Ovary (tissue), 10 donors: ENCODE measurements at regions of chr14 and their contacts with region 1.

Region 1: DNA sequence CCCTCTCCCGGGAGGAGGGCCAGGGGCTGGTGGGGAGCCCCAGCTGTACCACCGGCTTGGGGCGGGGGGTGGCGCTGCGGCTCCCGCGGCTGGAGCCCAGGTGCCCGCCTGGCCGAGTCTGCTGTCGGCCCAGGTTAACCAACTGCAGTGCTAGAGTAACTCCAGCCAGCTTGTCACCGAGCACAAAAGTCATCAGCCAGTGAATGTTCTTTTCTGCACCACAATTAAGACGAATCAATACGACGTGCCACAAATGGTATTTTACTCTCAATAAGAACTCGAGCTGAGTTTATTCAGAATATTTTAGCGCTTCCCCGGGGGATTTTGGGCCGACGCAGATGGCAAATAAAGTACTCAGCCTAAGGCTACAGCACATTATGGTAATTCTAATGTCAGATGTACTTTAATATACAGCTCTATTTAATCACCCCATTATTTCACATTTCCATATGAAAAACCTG is 83.2 kb downstream of the BCL11B start:
- DNase-seq: no peak
- H3K4me3 ChIP-seq: no peak overlapping the region
- H3K27ac ChIP-seq: no peak overlapping the region
- H3K4me1 ChIP-seq: peaks cover 4% of the 10 kb centered on the region
- H3K27me3 ChIP-seq: no peaks in the 10 kb centered on the region
- CTCF ChIP-seq: no peak
- EP300 ChIP-seq: no peak
- POLR2A ChIP-seq: no peak

Region 2: DNA sequence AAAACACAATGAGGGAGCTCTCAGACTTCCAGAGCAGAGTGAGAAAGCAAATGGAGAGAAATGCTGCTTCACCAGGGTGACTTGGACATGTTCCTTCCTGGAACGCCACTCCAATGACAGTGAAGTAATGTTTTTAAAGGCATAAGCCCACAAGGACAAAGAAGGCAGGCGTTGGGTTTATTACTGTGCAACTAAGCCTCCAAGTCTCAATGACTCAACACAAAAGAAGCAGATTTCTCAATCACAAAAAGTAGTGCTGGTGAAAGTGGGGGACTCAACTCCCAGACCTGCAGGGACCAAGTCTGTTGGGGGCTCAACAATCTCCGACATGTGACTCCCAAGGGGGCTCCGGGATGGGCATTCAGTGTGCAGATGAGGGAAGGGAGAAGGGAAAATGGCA is 421.9 kb before region 1 on chr14:
- intact Hi-C with region 1: no loop called
- DNase-seq: no peak
- H3K4me3 ChIP-seq: no peak overlapping the region
- H3K27ac ChIP-seq: no peak overlapping the region
- H3K4me1 ChIP-seq: no peaks in the 10 kb centered on the region
- H3K27me3 ChIP-seq: no peaks in the 10 kb centered on the region
- CTCF ChIP-seq: no peak
- EP300 ChIP-seq: no peak
- POLR2A ChIP-seq: no peak

Region 3: DNA sequence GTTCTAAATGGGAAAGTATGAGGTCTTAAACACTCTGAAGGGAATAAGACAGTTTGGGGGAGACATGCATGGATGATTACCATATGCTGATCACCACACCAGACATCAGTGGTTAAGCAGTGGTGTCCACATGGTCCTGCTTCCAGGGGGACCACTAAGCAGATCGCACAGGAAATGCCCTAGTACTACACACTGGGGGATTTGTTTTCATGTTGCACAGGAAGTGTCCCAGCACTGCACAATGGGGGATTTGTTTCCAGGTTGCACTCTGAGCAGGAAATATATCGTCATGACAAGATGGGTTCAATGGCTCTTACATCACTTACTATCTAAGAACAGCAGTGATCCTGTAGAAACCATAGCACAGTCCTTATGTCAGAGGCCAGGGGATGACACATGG is 162.3 kb before region 1 on chr14:
- intact Hi-C with region 1: loop called in 1 of 4 experiments (anchors 10 kb)
- DNase-seq: no peak
- H3K4me3 ChIP-seq: no peak overlapping the region
- H3K27ac ChIP-seq: no peak overlapping the region
- H3K4me1 ChIP-seq: no peaks in the 10 kb centered on the region
- H3K27me3 ChIP-seq: no peaks in the 10 kb centered on the region
- CTCF ChIP-seq: no peak
- EP300 ChIP-seq: no peak
- POLR2A ChIP-seq: no peak

Region 4: GRCh38 chr14:99287269-99287942 is 98.6 kb after region 1 on chr14:
- intact Hi-C with region 1: no loop called
- DNase-seq: no peak
- H3K4me3 ChIP-seq: no peak overlapping the region
- H3K27ac ChIP-seq: no peak overlapping the region
- H3K4me1 ChIP-seq: no peaks in the 10 kb centered on the region
- H3K27me3 ChIP-seq: no peaks in the 10 kb centered on the region
- CTCF ChIP-seq: no peak
- EP300 ChIP-seq: no peak
- POLR2A ChIP-seq: no peak

Region 5: GRCh38 chr14:99467338-99468078 is 278.7 kb after region 1 on chr14:
- intact Hi-C with region 1: no loop called
- DNase-seq: no peak
- H3K4me3 ChIP-seq: no peak overlapping the region
- H3K27ac ChIP-seq: no peak overlapping the region
- H3K4me1 ChIP-seq: peaks cover 4% of the 10 kb centered on the region
- H3K27me3 ChIP-seq: no peaks in the 10 kb centered on the region
- CTCF ChIP-seq: no peak
- EP300 ChIP-seq: no peak
- POLR2A ChIP-seq: no peak